Activated CD8-positive, alpha-beta T cell treated with anti-CD3 and anti-CD28 coated beads, Interleukin-2, amount 10 ng/mL, durations not matched to agents 7 days and 5 days (primary cell): ENCODE measurements at regions of chr1 and their contacts with region 1.

Region 1: DNA sequence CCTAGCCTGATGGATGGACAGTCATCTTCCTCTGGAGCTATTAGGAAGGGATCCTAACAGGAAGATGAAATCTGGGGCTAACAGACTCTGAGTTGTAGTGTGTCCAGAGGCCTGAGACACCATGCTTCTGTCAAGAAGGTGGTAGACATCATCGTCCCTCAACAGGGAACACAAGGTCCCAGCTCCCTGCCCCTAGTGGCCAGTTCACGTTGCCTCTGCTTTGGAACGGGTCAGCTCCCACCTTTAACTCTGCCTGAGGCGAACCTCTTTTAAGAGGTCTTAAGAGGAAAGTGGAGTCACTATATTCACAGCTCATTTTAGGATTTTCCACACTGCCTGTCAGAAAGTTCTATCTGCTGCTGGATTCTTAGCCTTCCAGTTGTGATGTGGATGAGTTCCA is 28.3 kb downstream of the LRRC71 start:
- DNase-seq: no peak
- ATAC-seq: no peak
- H3K4me3 Mint-ChIP-seq: no peak overlapping the region
- H3K27ac Mint-ChIP-seq: no peak overlapping the region
- H3K4me1 Mint-ChIP-seq: no peaks in the 10 kb centered on the region
- H3K27me3 Mint-ChIP-seq: no peaks in the 10 kb centered on the region

Region 2: GRCh38 chr1:156751758-156752757 is 196.7 kb before region 1 on chr1:
- CTCF ChIA-PET with region 1: no interaction called
- POLR2A ChIA-PET with region 1: no interaction called
- DNase-seq: peak; percentile 98
- ATAC-seq: peak; percentile 83
- H3K4me3 Mint-ChIP-seq: peak overlapping the region; percentile 96
- H3K27ac Mint-ChIP-seq: peak overlapping the region; percentile 96
- H3K4me1 Mint-ChIP-seq: peaks cover 37% of the 10 kb centered on the region
- H3K27me3 Mint-ChIP-seq: no peaks in the 10 kb centered on the region

Region 3: GRCh38 chr1:156961709-156962108 is 13.0 kb after region 1 on chr1:
- CTCF ChIA-PET with region 1: interaction called, 20 read pairs
- POLR2A ChIA-PET with region 1: no interaction called
- DNase-seq: peak; percentile 69
- ATAC-seq: peak; percentile 72
- H3K4me3 Mint-ChIP-seq: no peak overlapping the region
- H3K27ac Mint-ChIP-seq: no peak overlapping the region
- H3K4me1 Mint-ChIP-seq: peaks cover 39% of the 10 kb centered on the region
- H3K27me3 Mint-ChIP-seq: peaks cover 14% of the 10 kb centered on the region